BJ (cell line): ENCODE measurements at regions of chr4 and their contacts with region 1.

Region 1: GRCh38 chr4:38675146-38676121 is 11.4 kb downstream of the KLF3 start:
- DNase-seq: peak; percentile 22
- H3K4me3 ChIP-seq: no peak overlapping the region
- H3K27me3 ChIP-seq: no peaks in the 10 kb centered on the region
- CTCF ChIP-seq: peak; percentile 88

Region 2: DNA sequence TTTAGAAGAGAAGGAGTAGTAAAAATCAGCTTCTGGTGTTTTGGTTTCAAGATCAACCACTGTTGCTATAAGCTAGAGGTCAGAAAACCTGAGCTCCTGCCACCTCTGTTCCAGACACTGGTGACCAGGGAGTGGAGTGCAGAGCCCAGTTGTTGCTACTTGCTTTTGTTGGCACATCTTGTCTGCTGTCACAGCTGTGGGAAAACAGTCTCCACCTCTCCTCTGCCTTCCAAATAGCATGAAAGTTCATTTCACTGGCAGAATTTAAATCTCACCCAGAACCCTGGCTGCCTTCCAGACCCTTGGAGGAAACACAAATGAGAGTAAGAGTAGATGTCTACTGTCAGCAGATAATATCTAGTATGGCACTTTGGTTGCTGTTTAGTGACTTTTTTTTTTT is 309.0 kb before region 1 on chr4:
- CTCF ChIA-PET with region 1: no interaction called
- POLR2A ChIA-PET with region 1: no interaction called
- DNase-seq: no peak
- H3K4me3 ChIP-seq: no peak overlapping the region
- H3K27me3 ChIP-seq: no peaks in the 10 kb centered on the region
- CTCF ChIP-seq: no peak

Region 3: DNA sequence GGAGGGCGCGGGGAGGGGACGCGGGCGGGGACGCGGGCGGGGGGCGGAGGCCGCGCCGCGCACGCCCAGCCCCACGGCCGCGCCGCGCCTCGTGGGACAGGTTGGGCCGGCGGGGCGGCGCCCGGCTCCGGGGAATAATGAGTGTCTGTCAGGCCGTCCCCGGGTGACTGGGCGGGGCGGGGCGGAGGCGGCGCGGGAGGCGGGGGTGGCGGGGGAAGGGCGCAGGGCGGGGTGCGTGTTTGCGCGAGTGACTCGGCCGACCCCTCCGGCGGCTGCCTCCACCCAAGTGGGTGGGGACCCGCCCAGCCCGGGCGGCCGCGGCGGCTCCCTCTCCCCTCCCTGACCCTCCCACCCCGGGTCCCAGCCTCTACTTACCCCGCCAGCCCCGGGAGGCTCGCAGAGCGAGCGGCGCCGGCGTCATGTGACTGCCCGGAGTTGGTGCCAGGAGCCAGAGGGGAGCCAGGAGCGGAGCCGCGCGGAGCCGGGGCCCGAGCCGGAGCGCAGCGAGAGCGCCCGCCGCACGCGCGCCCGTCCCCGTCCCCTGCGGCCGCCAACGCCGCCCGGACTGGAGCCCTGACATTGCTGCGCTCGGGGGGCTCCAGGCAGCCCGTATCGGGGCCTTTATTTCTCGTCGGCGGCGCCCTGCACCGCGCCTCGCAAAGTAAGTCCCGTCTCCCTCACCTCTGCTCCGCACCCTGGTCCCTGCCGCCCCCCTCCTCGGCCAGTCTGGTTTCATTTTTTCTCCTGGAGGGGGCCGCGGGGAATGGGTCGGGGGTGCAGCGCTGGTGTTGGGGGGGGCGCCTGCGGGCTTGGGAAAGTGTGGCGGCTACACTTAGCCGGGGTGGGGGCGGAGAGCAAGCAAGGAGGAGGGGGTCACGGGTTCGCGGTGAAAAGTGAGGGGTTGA is 11.4 kb before region 1 on chr4 and contains the start of gene KLF3:
- CTCF ChIA-PET with region 1: interaction called, 13 read pairs
- POLR2A ChIA-PET with region 1: no interaction called
- DNase-seq: peak; percentile 50
- H3K4me3 ChIP-seq: peak within 1 kb of the TSS; percentile 88
- H3K27me3 ChIP-seq: no peaks in the 10 kb centered on the region
- CTCF ChIP-seq: no peak
- polyA plus RNA-seq, gene KLF3: 11.4 and 11.7 TPM in 2 replicates

Region 4: GRCh38 chr4:38691251-38692008 is 16.0 kb after region 1 on chr4:
- CTCF ChIA-PET with region 1: interaction called, 12 read pairs
- POLR2A ChIA-PET with region 1: no interaction called
- DNase-seq: peak; percentile 59
- H3K4me3 ChIP-seq: no peak overlapping the region
- H3K27me3 ChIP-seq: no peaks in the 10 kb centered on the region
- CTCF ChIP-seq: no peak

Region 5: DNA sequence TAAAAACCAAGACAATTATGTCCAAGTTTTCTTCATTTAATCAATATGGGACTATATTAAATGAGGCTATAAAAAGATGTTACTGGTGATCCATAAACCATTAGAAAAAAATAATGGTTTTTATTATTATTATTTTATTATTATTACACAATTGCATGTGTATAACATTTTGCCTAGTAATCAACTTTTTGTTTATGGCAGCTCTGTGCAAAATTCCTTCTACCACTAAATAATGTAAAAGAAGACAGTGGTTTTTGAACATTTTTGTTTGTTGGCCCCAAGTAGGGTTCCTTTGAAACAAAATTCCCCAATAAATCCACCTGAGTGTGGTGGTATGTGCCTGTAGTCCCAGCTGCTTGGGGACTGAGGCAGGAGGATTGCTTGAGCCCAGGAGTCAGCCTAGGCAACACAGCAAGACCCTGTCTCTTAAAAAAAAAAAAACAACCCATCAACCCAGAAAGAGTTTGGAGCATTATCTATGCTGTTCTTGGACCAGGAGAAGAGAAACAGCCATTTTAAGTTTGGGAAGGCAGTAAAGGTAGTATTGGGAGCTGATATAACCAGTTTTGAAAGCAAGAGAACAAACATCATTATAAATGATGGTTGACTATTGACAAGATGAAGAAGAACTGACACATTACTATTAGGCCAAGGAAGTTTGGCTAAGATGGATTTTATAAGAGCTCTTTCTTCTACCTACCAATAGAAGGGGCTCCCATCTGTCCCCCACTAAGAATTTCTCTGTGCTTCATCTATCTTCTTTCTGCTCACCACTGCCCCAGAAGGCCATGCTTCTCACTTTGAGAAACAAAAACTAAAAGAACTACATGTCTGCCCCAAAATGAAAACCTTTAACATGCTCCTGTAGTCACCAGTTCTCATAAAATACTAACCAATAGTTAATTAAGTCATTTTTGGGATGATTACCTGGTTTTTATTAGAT is 354.6 kb after region 1 on chr4:
- CTCF ChIA-PET with region 1: no interaction called
- POLR2A ChIA-PET with region 1: no interaction called
- DNase-seq: no peak
- H3K4me3 ChIP-seq: no peak overlapping the region
- H3K27me3 ChIP-seq: no peaks in the 10 kb centered on the region
- CTCF ChIP-seq: no peak